ENCODE measurements at regions of chr14 and their contacts with region 1.

Region 1: GRCh38 chr14:23327947-23328744 is 6.9 kb downstream of the PABPN1 start:
- DNase-seq: peak; percentile 88
- H3K4me3 Mint-ChIP-seq: no peak overlapping the region
- H3K27ac Mint-ChIP-seq: no peak overlapping the region
- H3K4me1 Mint-ChIP-seq: peaks cover 5% of the 10 kb centered on the region
- H3K27me3 Mint-ChIP-seq: peaks cover 4% of the 10 kb centered on the region

Region 2: DNA sequence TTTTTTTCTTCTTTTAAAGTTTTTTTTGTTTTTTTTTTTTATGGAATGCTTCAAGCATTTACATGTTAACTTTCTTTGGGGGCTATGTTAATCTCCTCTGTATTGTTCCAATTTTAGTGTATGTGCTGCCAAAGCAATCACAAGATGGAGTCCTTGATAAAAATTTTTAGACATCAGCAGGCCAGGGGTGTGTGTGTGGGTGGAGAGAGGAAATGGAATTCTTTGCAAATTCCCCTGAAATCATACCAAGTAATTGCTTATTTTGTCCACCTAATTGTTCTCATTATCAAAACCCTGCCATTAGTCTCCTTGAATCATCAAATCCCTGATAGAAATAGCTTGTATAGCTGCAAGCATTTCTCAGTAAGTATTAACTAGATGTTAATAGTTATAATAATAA is 68.7 kb before region 1 on chr14:
- intact Hi-C with region 1: loop called (anchors 2 kb)
- DNase-seq: no peak
- H3K4me3 Mint-ChIP-seq: no peak overlapping the region
- H3K27ac Mint-ChIP-seq: no peak overlapping the region
- H3K4me1 Mint-ChIP-seq: no peaks in the 10 kb centered on the region
- H3K27me3 Mint-ChIP-seq: peaks cover 47% of the 10 kb centered on the region

Region 3: GRCh38 chr14:23308721-23309445 is 19.3 kb before region 1 on chr14:
- intact Hi-C with region 1: no loop called
- DNase-seq: no peak
- H3K4me3 Mint-ChIP-seq: no peak overlapping the region
- H3K27ac Mint-ChIP-seq: no peak overlapping the region
- H3K4me1 Mint-ChIP-seq: peaks cover 13% of the 10 kb centered on the region
- H3K27me3 Mint-ChIP-seq: peaks cover 12% of the 10 kb centered on the region

Region 4: DNA sequence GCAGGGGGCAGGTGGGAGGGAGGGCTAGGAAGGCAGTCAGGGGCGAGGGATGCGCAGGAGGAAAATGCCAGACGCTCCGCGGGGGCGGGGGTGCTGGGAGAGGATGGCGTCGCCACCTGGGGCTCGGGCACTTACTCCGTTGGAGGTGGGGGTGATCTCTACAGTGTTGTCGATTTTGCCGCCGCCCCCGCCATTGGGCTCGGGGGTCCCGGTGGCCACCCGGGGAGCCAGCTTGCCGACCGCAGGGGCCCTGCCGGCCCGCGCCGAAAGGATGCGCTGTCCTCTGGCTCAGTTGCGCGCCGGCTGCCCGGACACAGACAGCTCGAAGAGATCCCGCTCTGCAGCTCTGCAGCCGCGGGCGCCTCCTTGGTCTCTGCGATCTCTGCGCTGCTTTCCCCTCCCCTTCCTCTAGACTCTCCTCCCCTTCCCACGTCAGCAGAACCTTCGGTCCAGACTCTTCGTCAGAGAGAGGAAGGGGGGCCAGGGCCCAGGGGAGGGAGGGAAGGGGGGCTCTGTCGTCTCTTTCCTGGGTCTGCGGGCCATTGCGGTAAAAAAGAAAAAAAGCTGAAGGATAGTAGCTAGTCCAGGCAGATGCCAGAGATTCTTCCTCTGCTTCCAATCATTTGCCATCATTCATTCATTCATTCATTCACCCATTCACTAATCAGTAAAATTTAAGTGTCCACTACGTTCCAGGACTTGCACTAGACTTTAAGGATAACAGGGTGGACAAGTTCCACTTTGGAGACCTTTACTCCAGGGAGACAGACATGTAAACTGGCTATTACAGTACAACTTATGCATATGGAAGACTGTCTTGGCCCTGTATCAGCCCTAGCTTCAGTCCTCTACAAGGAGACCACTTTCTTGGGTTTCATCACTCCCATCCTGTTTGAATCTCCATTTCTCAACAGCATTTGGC is 24.6 kb after region 1 on chr14 and contains the start of gene SLC22A17:
- intact Hi-C with region 1: loop called (anchors 2 kb)
- DNase-seq: peak; percentile 83
- H3K4me3 Mint-ChIP-seq: peak within 1 kb of the TSS; percentile 78
- H3K27ac Mint-ChIP-seq: no peak within 1 kb of the TSS
- H3K4me1 Mint-ChIP-seq: peaks cover 4% of the 10 kb centered on the region
- H3K27me3 Mint-ChIP-seq: peaks cover 42% of the 10 kb centered on the region
- total RNA-seq, gene SLC22A17: 2.0 and 2.3 TPM in 2 replicates

Region 5: GRCh38 chr14:23379366-23380196 is 51.4 kb after region 1 on chr14:
- intact Hi-C with region 1: loop called (anchors 1 kb)
- DNase-seq: peak; percentile 90
- H3K4me3 Mint-ChIP-seq: no peak overlapping the region
- H3K27ac Mint-ChIP-seq: no peak overlapping the region
- H3K4me1 Mint-ChIP-seq: no peaks in the 10 kb centered on the region
- H3K27me3 Mint-ChIP-seq: peaks cover 10% of the 10 kb centered on the region

Region 6: GRCh38 chr14:23421594-23421993 is 93.4 kb after region 1 on chr14:
- intact Hi-C with region 1: no loop called
- DNase-seq: peak; percentile 77
- H3K4me3 Mint-ChIP-seq: no peak overlapping the region
- H3K27ac Mint-ChIP-seq: peak overlapping the region; percentile 85
- H3K4me1 Mint-ChIP-seq: peaks cover 17% of the 10 kb centered on the region
- H3K27me3 Mint-ChIP-seq: no peaks in the 10 kb centered on the region

Region 7: GRCh38 chr14:23567192-23568020 is 239.3 kb after region 1 on chr14 and contains the start of gene AP1G2:
- intact Hi-C with region 1: loop called (anchors 2 kb)
- DNase-seq: peak; percentile 97
- H3K4me3 Mint-ChIP-seq: peak within 1 kb of the TSS; percentile 99
- H3K27ac Mint-ChIP-seq: peak within 1 kb of the TSS; percentile 98
- H3K4me1 Mint-ChIP-seq: peaks cover 35% of the 10 kb centered on the region
- H3K27me3 Mint-ChIP-seq: peaks cover under 1% of the 10 kb centered on the region
- total RNA-seq, gene AP1G2: 135 and 142 TPM in 2 replicates

Measured in activated CD4-positive, alpha-beta T cell treated with anti-CD3 and anti-CD28 coated beads, Interleukin-2, amount 10 ng/mL, durations not matched to agents 24 days and 14 days (primary cell).